PC-9 (cell line): ENCODE measurements at regions of chr2 and their contacts with region 1.

Region 1: GRCh38 chr2:98444436-98445176 is at the start of gene INPP4A:
- DNase-seq: peak; percentile 53 to 80
- H3K4me3 ChIP-seq: peak within 1 kb of the TSS; percentile 91
- H3K27ac ChIP-seq: peak within 1 kb of the TSS; percentile 45
- H3K4me1 ChIP-seq: peaks cover 22% of the 10 kb centered on the region
- H3K27me3 ChIP-seq: no peaks in the 10 kb centered on the region
- CTCF ChIP-seq: no peak
- total RNA-seq, gene INPP4A: 50.5 and 52.9 TPM in 2 replicates

Region 2: DNA sequence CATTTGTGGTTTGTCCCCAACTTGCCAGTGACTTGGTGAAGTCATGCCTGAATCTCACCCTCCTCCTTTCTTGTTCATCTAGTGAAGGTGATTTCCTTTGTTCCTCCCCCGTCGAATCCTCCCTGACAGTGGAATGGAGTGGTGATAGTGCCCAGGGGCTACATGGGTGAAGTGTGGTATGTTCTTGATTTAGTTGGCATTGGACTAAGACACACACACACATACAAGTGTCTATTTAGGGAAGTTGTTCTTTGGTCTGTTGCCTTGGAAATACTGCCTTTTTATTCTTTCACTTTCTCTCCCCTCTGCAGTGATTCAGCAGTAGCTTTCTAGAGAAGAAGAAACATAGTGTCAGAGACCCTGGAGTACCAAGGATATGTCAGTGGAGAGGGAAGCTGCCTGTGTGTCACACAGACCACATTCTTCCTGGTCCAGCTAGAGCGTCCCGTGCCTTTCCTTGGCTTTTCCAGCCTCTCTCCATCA is 10.9 kb after region 1 on chr2:
- CTCF ChIA-PET with region 1: no interaction called
- POLR2A ChIA-PET with region 1: interaction called, 32 read pairs
- intact Hi-C with region 1: loop called (anchors 1 kb)
- DNase-seq: no peak
- H3K4me3 ChIP-seq: no peak overlapping the region
- H3K27ac ChIP-seq: peak overlapping the region; percentile 92; the same call in 1 of the 2 replicates
- H3K4me1 ChIP-seq: peaks cover 60% of the 10 kb centered on the region
- H3K27me3 ChIP-seq: no peaks in the 10 kb centered on the region
- CTCF ChIP-seq: no peak

Region 3: DNA sequence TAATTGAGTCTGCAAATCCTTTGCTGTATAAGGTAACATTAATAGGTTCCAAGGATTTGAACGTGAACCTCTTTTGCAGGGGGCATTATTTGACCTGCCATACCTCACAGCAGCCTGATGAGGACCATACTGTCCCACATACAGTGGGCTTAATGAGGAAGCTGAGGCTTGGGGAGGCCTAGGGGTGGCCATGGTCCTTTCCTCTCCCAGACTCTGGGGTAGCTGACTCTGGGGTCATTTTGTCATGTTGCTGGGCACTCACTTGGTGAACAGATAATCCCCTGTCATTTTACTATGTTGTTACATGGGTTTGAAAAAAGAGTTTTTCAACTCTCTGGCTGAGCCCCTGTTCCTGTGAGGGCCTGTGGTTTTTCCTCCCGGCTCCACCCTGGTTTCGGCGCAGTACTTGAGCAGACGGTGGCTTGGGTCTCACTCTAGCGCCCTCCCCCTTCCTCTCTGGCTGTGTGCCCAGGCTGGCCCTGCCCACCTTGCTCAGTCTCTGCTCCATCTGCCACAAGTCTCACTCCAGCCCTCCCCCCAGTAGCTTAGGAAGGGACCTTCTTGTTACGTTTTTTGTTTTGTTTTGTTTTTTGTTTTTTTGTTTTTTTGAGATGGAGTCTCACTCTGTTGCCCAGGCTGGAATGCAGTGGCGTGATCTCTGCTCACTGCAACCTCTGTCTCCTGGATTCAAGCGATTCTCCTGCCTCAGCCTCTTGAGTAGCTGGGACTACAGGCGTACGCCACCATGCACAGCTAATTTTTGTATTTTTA is 21.0 kb after region 1 on chr2:
- CTCF ChIA-PET with region 1: no interaction called
- POLR2A ChIA-PET with region 1: no interaction called
- intact Hi-C with region 1: loop called (anchors 2 kb)
- DNase-seq: peak in 1 of 2 experiments; percentile 89
- H3K4me3 ChIP-seq: no peak overlapping the region
- H3K27ac ChIP-seq: no peak overlapping the region
- H3K4me1 ChIP-seq: peaks cover 11% of the 10 kb centered on the region
- H3K27me3 ChIP-seq: no peaks in the 10 kb centered on the region
- CTCF ChIP-seq: no peak

Region 4: DNA sequence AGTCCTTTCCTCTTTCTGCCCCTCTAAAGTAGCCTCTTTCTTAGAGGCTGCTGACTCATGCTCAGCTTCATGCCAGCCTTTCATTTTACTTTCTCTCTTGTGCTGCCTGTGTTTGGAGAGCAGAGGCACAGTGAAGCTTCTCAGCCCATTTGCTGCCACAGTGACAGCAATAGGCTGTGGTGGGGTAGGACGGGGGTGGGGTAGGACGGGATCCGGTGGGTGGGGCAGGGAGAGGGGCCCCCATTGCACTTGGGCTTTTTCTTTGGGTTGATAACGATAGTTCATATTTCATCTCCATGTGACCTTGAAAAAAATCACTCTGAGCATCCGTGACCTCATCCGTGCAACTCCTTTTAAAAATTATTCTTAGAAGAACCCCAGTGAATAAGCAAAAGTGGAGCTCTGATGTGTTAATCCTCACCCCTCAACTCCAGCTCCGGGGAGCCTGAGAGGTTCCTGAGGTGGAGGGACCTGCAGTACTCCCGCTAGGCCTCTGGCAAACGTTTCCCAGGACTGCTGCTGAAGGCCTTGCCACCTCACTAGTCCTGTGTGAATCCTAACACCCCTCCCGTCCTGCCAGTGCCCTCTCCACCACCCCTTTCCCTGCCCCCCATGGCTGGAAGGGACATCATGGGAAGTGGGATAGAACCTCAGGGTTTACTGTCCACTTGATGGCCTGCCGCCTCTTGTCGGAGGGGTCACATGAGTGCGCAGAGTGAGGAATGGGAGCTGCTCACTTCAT is 70.8 kb after region 1 on chr2:
- CTCF ChIA-PET with region 1: no interaction called
- POLR2A ChIA-PET with region 1: interaction called, 11 read pairs
- intact Hi-C with region 1: no loop called
- DNase-seq: no peak
- H3K4me3 ChIP-seq: no peak overlapping the region
- H3K27ac ChIP-seq: no peak overlapping the region
- H3K4me1 ChIP-seq: peaks cover 9% of the 10 kb centered on the region; the same call in 1 of the 2 replicates
- H3K27me3 ChIP-seq: no peaks in the 10 kb centered on the region
- CTCF ChIP-seq: no peak

Region 5: GRCh38 chr2:98568881-98569793 is 124.5 kb after region 1 on chr2:
- CTCF ChIA-PET with region 1: no interaction called
- POLR2A ChIA-PET with region 1: no interaction called
- intact Hi-C with region 1: loop called (anchors 10 kb)
- DNase-seq: peak in 1 of 2 experiments; percentile 43
- H3K4me3 ChIP-seq: no peak overlapping the region
- H3K27ac ChIP-seq: no peak overlapping the region
- H3K4me1 ChIP-seq: no peaks in the 10 kb centered on the region
- H3K27me3 ChIP-seq: no peaks in the 10 kb centered on the region
- CTCF ChIP-seq: peak; percentile 97